GM12878 (cell line): ENCODE measurements at regions of chr14 and their contacts with region 1.

Region 1: DNA sequence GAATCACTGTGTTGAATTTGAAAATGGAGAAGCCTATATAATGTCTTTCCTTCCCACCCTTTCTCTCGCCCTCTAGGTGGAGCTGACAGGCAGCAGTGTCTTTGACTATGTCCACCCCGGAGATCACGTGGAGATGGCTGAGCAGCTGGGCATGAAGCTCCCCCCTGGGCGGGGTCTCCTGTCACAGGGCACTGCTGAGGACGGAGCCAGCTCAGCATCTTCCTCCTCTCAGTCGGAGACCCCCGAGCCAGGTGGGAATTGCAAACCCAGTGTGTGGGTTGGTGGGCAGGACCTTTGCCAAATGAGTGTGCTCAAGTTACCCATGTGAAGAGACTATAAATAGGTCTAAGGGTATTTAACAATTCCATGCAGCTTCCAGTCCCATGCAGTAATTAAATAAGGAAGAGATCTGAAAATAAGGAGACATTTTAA is 274.7 kb downstream of the EGLN3 start:
- DNase-seq: no peak
- ATAC-seq: peak; percentile 94
- H3K4me3 ChIP-seq: no peak overlapping the region
- H3K27ac ChIP-seq: no peak overlapping the region
- H3K4me1 ChIP-seq: no peaks in the 10 kb centered on the region
- H3K27me3 ChIP-seq: no peaks in the 10 kb centered on the region
- CTCF ChIP-seq: peak; percentile 14 to 51 (median 31); a peak in 4 of 6 replicates
- EP300 ChIP-seq: no peak
- POLR2A ChIP-seq: no peak
- RAD21 ChIP-seq: 0 out of 2 replicates have a peak, but pooled peaks have one; percentile 15

Region 2: DNA sequence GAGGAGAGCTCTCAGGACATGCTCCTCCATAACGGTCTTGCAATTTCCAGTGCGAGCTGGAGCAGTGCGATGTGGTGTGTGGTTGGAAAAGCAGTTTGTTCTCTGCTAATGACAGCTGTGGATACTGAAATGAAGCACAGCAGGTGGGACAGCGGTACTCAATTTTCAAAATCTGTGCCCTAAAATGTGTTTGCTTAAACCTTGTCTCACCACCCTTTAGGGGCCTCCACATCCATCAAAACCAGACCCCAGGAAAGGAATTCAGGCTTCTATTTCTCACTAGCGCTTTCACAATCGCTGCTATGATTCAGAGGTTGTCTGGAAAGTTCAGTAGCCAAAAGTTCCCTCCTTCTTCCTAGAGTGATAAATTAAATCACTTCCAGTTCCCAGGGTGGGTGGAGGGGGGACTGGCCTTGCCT is 166.1 kb before region 1 on chr14:
- CTCF ChIA-PET with region 1: interaction called, 138 read pairs
- POLR2A ChIA-PET with region 1: interaction called, 5 read pairs
- RAD21 ChIA-PET with region 1: interaction called, 128 read pairs
- SMC1A ChIA-PET with region 1: interaction called, 135 read pairs
- in situ Hi-C with region 1: no loop called
- intact Hi-C with region 1: no loop called
- DNase-seq: no peak
- ATAC-seq: no peak
- H3K4me3 ChIP-seq: no peak overlapping the region
- H3K27ac ChIP-seq: no peak overlapping the region
- H3K4me1 ChIP-seq: no peaks in the 10 kb centered on the region
- H3K27me3 ChIP-seq: peaks cover 0 to 2% of the 10 kb centered on the region in 2 experiments; a peak in 2 of 4 replicates
- CTCF ChIP-seq: no peak
- EP300 ChIP-seq: no peak
- POLR2A ChIP-seq: no peak
- RAD21 ChIP-seq: no peak

Region 3: GRCh38 chr14:33564774-33565630 is 111.1 kb before region 1 on chr14:
- CTCF ChIA-PET with region 1: interaction called, 24 read pairs
- POLR2A ChIA-PET with region 1: interaction called, 4 read pairs
- RAD21 ChIA-PET with region 1: interaction called, 42 read pairs
- SMC1A ChIA-PET with region 1: interaction called, 53 read pairs
- in situ Hi-C with region 1: no loop called
- intact Hi-C with region 1: no loop called
- DNase-seq: peak; percentile 57
- ATAC-seq: peak; percentile 92
- H3K4me3 ChIP-seq: no peak overlapping the region
- H3K27ac ChIP-seq: no peak overlapping the region
- H3K4me1 ChIP-seq: no peaks in the 10 kb centered on the region
- H3K27me3 ChIP-seq: peaks cover 0 to 3% of the 10 kb centered on the region in 2 experiments; a peak in 1 of 4 replicates
- CTCF ChIP-seq: no peak
- EP300 ChIP-seq: peak in 1 of 2 experiments; percentile 70; a peak in 1 of 4 replicates
- POLR2A ChIP-seq: no peak
- RAD21 ChIP-seq: no peak

Region 4: DNA sequence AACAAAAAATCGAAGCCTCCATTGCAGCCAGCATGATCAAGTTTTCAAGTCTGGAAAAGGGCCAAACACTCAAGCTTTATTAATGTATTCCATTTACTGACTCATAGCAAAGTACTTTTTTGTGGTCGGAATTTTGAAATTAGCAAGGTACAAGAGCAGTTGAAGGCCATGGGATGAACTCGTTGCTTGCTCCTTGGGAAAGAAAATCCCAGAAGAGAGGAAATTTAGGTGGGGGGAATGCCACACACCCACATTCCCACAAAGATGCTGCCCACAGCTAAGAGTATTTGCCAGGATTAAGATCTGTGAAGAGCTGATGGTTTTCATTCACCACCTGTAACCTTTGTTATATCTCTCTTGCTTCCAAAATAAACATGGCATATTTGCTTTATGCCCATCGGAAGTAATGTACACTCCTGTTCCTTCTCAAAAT is 58.9 kb before region 1 on chr14:
- CTCF ChIA-PET with region 1: interaction called, 20 read pairs
- POLR2A ChIA-PET with region 1: interaction called, 5 read pairs
- RAD21 ChIA-PET with region 1: interaction called, 8 read pairs
- SMC1A ChIA-PET with region 1: interaction called, 7 read pairs
- in situ Hi-C with region 1: no loop called
- intact Hi-C with region 1: no loop called
- DNase-seq: no peak
- ATAC-seq: no peak
- H3K4me3 ChIP-seq: no peak overlapping the region
- H3K27ac ChIP-seq: no peak overlapping the region
- H3K4me1 ChIP-seq: no peaks in the 10 kb centered on the region
- H3K27me3 ChIP-seq: no peaks in the 10 kb centered on the region
- CTCF ChIP-seq: no peak
- EP300 ChIP-seq: no peak
- POLR2A ChIP-seq: no peak
- RAD21 ChIP-seq: no peak

Region 5: GRCh38 chr14:33704441-33704840 is 28.3 kb after region 1 on chr14:
- CTCF ChIA-PET with region 1: interaction called, 25 read pairs
- POLR2A ChIA-PET with region 1: no interaction called
- RAD21 ChIA-PET with region 1: interaction called, 15 read pairs
- SMC1A ChIA-PET with region 1: interaction called, 12 read pairs
- in situ Hi-C with region 1: no loop called
- intact Hi-C with region 1: no loop called
- DNase-seq: no peak
- ATAC-seq: peak; percentile 43; the same call in 1 of the 3 replicates
- H3K4me3 ChIP-seq: no peak overlapping the region
- H3K27ac ChIP-seq: no peak overlapping the region
- H3K4me1 ChIP-seq: no peaks in the 10 kb centered on the region
- H3K27me3 ChIP-seq: no peaks in the 10 kb centered on the region
- CTCF ChIP-seq: no peak
- EP300 ChIP-seq: no peak
- POLR2A ChIP-seq: no peak
- RAD21 ChIP-seq: no peak

Region 6: DNA sequence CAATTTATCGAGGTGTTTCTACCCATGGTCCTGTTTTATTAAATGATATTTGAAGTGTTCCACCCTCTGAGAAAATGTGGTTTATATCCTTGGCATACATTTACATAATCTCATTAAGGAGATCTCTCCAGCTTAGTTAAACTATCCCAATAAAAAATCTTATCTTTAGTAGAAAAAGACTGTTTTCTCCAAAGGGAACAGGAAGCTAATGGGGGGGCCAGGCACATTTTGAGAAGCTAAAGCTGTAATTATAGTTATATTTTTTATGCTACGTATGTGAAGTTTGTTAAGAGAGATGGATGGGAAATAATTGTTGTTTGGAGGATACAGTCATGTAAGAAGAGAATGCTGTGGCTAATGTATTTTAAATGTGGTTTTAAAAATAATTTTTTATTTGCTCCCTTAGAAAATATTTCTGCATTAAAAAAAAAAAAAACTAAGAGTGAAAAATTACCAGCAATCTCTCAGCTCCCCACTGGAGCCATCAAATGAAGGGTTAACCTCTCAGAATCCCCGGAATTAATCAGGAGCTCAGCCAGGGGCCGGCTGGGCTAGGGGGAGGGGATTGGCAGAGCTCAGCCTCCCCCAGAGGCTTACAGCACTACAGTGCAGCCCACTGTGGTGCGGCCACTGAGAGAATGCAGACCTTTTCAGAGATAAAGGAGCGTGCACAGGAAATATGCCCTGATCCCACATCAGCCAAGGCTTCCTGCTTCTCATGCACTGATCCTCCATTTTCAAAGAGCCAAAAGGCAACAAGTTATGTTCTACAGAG is 88.9 kb after region 1 on chr14:
- CTCF ChIA-PET with region 1: interaction called, 39 read pairs
- POLR2A ChIA-PET with region 1: no interaction called
- RAD21 ChIA-PET with region 1: interaction called, 5 read pairs
- SMC1A ChIA-PET with region 1: interaction called, 26 read pairs
- in situ Hi-C with region 1: no loop called
- intact Hi-C with region 1: no loop called
- DNase-seq: no peak
- ATAC-seq: no peak
- H3K4me3 ChIP-seq: no peak overlapping the region
- H3K27ac ChIP-seq: no peak overlapping the region
- H3K4me1 ChIP-seq: no peaks in the 10 kb centered on the region
- H3K27me3 ChIP-seq: no peaks in the 10 kb centered on the region
- CTCF ChIP-seq: no peak
- EP300 ChIP-seq: no peak
- POLR2A ChIP-seq: no peak
- RAD21 ChIP-seq: no peak

Region 7: GRCh38 chr14:33814010-33814409 is 137.9 kb after region 1 on chr14:
- CTCF ChIA-PET with region 1: no interaction called
- POLR2A ChIA-PET with region 1: no interaction called
- RAD21 ChIA-PET with region 1: no interaction called
- SMC1A ChIA-PET with region 1: no interaction called
- in situ Hi-C with region 1: no loop called
- intact Hi-C with region 1: no loop called
- DNase-seq: no peak
- ATAC-seq: no peak
- H3K4me3 ChIP-seq: no peak overlapping the region
- H3K27ac ChIP-seq: no peak overlapping the region
- H3K4me1 ChIP-seq: no peaks in the 10 kb centered on the region
- H3K27me3 ChIP-seq: peaks cover 0 to 3% of the 10 kb centered on the region in 2 experiments; a peak in 1 of 4 replicates
- CTCF ChIP-seq: no peak
- EP300 ChIP-seq: no peak
- POLR2A ChIP-seq: no peak
- RAD21 ChIP-seq: no peak

Region 8: DNA sequence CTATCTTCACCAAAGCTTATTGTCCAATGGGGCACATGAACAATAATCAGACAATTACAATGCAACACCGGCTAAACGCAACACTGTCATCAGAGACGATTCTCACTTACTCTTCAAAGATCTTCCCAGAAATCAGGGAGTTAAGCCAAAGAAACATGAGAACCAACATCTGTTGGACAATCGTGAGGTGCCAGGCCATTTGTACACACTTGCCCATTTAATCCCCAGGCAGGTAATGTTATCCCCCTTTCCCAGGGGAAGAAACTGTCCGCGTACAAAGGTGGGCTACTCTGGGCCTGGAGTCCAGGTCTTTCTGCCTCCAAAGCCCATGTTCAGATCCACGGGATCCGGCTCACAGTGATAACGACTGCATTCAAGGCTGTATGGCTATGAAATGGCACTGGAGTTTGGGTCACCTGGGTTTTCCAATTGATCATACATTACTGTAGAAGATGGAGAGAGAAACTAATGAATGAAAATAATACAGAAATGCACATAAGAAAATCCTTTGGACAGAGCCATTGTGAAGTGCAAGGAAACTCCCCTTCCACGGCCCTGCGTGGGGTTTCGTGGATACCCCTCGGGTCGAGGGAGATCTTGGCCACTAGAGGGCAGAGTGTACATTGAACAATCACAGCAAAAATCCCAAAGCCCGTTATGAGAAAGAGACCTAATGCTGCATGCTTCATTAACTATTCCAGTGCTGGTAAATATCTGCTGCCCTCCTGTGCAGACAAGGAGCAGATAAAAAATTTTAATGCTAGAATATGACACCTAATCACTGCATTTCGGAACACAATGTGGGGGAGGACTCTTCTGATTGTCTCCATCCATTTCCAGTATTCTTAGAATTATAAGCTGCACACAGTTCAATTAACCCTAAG is 163.3 kb after region 1 on chr14:
- CTCF ChIA-PET with region 1: interaction called, 18 read pairs
- POLR2A ChIA-PET with region 1: no interaction called
- RAD21 ChIA-PET with region 1: interaction called, 12 read pairs
- SMC1A ChIA-PET with region 1: interaction called, 9 read pairs
- in situ Hi-C with region 1: no loop called
- intact Hi-C with region 1: no loop called
- DNase-seq: no peak
- ATAC-seq: peak; percentile 84
- H3K4me3 ChIP-seq: no peak overlapping the region
- H3K27ac ChIP-seq: no peak overlapping the region
- H3K4me1 ChIP-seq: no peaks in the 10 kb centered on the region
- H3K27me3 ChIP-seq: peaks cover 0 to 3% of the 10 kb centered on the region in 2 experiments; a peak in 1 of 4 replicates
- CTCF ChIP-seq: peak; percentile 73 to 85 (median 77)
- EP300 ChIP-seq: no peak
- POLR2A ChIP-seq: no peak
- RAD21 ChIP-seq: peak; percentile 79